A673 (cell line): ENCODE measurements at regions of chr5 and their contacts with region 1.

Region 1: DNA sequence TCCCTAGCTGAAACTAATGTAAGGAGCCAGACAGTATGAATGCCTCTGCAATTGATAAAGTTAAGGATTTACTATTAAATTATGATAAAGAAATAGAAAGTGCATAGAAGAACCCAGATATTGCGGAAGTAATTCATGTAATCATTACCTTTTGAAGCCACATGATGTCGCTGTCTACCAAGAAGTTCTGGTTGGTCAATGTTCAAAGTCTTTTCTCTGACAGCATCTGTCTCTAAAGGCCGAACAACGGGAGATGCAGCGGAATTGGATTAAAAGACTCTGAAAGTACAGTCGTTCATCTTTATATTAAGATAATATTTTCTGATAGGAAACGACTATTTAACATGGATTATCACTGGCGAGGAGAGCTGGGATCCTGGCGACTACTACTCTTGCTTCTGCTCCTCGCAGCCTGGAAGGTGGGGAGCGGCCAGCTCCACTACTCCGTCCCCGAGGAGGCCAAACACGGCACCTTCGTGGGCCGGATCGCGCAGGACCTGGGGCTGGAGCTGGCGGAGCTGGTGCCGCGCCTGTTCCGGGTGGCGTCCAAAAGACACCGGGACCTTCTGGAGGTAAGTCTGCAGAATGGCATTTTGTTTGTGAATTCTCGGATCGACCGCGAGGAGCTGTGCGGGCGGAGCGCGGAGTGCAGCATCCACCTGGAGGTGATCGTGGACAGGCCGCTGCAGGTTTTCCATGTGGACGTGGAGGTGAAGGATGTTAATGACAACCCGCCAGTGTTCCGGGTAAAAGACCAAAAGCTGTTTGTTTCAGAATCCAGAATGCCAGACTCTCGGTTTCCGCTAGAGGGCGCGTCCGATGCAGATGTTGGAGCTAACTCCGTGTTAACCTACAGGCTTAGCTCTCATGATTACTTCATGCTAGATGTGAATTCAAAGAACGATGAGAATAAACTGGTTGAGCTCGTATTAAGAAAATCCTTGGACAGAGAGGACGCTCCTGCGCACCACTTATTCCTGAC is at the start of gene PCDHA8:
- DNase-seq: peak; percentile 76
- H3K4me3 ChIP-seq: peak within 1 kb of the TSS; percentile 52
- H3K27ac ChIP-seq: no peak within 1 kb of the TSS
- H3K4me1 ChIP-seq: no peaks in the 10 kb centered on the region
- H3K27me3 ChIP-seq: no peaks in the 10 kb centered on the region
- CTCF ChIP-seq: peak; percentile 71
- total RNA-seq, gene PCDHA8: 1.4 and 1.5 TPM in 2 replicates

Region 2: DNA sequence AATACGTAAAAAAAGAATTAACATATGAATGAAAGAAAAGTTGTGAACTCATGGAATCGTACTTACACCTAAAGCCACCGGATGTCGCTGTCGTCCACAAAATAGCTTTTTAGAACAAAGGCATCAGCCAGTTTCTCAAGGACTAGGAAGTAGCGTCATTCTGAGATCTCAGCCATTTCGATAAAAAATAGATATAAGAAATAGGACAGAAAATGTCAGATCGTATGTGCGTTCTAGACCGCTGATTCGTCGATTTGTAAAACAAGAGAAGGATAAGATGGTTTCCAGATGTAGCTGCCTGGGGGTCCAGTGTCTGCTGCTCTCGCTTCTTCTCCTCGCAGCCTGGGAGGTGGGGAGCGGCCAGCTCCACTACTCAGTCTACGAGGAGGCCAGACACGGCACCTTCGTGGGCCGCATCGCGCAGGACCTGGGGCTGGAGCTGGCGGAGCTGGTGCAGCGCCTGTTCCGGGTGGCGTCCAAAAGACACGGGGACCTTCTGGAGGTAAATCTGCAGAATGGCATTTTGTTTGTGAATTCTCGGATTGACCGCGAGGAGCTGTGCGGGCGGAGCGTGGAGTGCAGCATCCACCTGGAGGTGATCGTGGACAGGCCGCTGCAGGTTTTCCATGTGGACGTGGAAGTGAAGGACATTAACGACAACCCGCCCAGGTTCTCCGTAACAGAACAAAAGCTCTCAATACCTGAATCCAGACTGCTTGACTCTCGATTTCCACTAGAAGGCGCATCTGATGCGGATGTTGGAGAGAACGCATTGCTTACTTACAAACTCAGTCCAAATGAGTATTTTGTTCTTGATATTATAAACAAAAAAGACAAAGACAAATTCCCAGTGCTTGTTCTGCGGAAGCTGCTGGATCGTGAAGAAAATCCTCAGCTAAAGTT is 14.8 kb after region 1 on chr5 and contains the start of gene PCDHA10:
- CTCF ChIA-PET with region 1: interaction called, 13 read pairs
- POLR2A ChIA-PET with region 1: no interaction called
- intact Hi-C with region 1: no loop called
- DNase-seq: peak; percentile 79
- H3K4me3 ChIP-seq: peak within 1 kb of the TSS; percentile 63
- H3K27ac ChIP-seq: peak within 1 kb of the TSS; percentile 78
- H3K4me1 ChIP-seq: peaks cover 5% of the 10 kb centered on the region
- H3K27me3 ChIP-seq: no peaks in the 10 kb centered on the region
- CTCF ChIP-seq: peak; percentile 61
- total RNA-seq, gene PCDHA10: 11.5 and 11.6 TPM in 2 replicates